Heart left ventricle (tissue), 16 donors: ENCODE measurements at regions of chr5 and their contacts with region 1.

Region 1: DNA sequence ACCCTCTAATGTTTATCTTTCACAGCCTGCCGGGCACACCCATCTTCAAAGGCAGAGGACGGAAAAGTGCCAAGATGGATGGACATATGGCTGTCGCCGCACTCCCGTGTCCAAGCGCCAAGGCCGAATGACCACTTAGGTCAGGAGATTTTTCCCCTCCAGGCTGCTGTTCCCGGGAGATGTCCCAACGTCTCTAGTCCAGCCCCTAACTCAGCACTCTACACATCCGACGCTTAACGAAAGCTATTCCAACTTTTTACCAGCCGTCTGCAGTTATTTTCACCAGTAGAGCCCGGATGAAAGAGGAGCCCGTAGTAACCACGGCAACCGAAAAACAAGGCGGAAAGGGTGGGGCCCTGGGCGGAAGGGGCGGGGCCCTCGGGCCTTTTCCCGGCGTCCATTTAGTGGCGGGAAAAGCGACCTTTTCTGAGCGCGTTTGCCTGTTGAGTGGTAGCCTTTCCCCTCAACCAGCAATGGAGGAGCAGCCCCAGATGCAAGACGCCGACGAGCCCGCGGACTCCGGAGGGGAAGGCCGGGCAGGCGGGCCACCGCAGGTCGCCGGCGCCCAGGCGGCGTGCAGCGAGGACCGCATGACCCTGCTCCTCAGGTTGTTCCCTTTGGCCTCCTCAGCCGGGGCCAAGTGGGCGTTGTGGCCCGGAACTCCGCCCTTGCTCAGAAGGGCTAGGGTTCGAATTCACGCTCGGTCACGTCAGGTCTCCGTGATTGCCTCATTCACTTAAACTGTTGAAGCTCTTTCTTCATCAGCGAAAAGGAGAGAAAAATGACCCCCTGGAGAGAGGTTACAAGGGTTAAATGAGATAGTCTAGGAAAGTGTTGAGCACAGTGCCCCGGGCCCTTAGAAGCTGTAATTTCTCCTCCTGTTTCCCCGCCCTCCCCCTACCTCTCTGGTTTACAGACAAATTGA is at the start of gene CENPH:
- DNase-seq: peak; percentile 87 to 91 (median 89)
- ATAC-seq: peak; percentile 97 to 100 (median 99)
- H3K4me3 ChIP-seq: peak within 1 kb of the TSS; percentile 58 to 95 (median 80)
- H3K27ac ChIP-seq: peak within 1 kb of the TSS in 11 of 12 donors; percentile 49 to 80 (median 68)
- H3K4me1 ChIP-seq: peaks cover 0 to 17% (median 10%) of the 10 kb centered on the region in 12 donors
- H3K27me3 ChIP-seq: no peaks in the 10 kb centered on the region
- CTCF ChIP-seq: no peak
- POLR2A ChIP-seq: peak in 1 of 2 donors; percentile 17
- total RNA-seq, gene CENPH: 1.1 to 6.9 (median 2.7) TPM

Region 2: DNA sequence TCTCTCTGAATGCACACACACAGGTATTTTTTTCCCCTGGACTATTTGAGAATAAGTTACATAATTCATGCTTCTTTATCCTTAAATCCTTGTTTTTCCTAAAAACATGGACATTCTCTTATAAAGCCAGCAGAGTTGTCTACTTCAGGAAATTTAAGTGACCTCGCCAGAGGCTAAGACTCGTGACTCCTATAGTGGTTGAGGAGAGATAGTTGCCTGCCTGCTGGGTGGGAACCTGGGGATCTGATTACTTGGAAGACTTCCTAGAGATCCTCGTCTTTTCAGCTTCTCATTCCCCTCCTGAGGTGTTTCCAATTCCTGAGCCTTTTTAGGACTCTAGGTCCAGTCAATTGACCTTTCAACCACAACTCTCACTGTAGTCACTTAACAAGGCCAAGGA is 90.1 kb before region 1 on chr5:
- intact Hi-C with region 1: loop called in 1 of 10 experiments (anchors 5 kb)
- DNase-seq: no peak
- ATAC-seq: no peak
- H3K4me3 ChIP-seq: no peak overlapping the region
- H3K27ac ChIP-seq: no peak overlapping the region
- H3K4me1 ChIP-seq: peaks cover 0 to 28% (median 15%) of the 10 kb centered on the region in 12 donors
- H3K27me3 ChIP-seq: no peaks in the 10 kb centered on the region
- CTCF ChIP-seq: no peak
- POLR2A ChIP-seq: no peak